T-cell (primary cell): ENCODE measurements at regions of chr1 and their contacts with region 1.

Region 1: GRCh38 chr1:236089046-236089773 is 24.3 kb upstream of the NID1 start:
- DNase-seq: no peak
- ATAC-seq: no peak
- H3K4me3 ChIP-seq: no peak overlapping the region
- H3K4me3 Mint-ChIP-seq: no peak overlapping the region
- H3K27ac ChIP-seq: no peak overlapping the region
- H3K27ac Mint-ChIP-seq: no peak overlapping the region
- H3K4me1 ChIP-seq: no peaks in the 10 kb centered on the region
- H3K4me1 Mint-ChIP-seq: no peaks in the 10 kb centered on the region
- H3K27me3 ChIP-seq: peaks cover 0 to 16% of the 10 kb centered on the region in 2 experiments
- H3K27me3 Mint-ChIP-seq: peaks cover 3 to 6% of the 10 kb centered on the region in 2 donors

Region 2: GRCh38 chr1:235855811-235856429 is 233.3 kb before region 1 on chr1:
- CTCF ChIA-PET with region 1: interaction called in 1 of 2 experiments, 11 read pairs
- POLR2A ChIA-PET with region 1: no interaction called
- DNase-seq: no peak
- ATAC-seq: peak in 1 of 4 experiments; percentile 53
- H3K4me3 ChIP-seq: no peak overlapping the region
- H3K4me3 Mint-ChIP-seq: no peak overlapping the region
- H3K27ac ChIP-seq: peak overlapping the region; percentile 14
- H3K27ac Mint-ChIP-seq: no peak overlapping the region
- H3K4me1 ChIP-seq: peaks cover 5 to 15% of the 10 kb centered on the region in 2 experiments
- H3K4me1 Mint-ChIP-seq: peaks cover 26 to 39% (median 28%) of the 10 kb centered on the region in 3 donors
- H3K27me3 ChIP-seq: no peaks in the 10 kb centered on the region
- H3K27me3 Mint-ChIP-seq: no peaks in the 10 kb centered on the region

Region 3: DNA sequence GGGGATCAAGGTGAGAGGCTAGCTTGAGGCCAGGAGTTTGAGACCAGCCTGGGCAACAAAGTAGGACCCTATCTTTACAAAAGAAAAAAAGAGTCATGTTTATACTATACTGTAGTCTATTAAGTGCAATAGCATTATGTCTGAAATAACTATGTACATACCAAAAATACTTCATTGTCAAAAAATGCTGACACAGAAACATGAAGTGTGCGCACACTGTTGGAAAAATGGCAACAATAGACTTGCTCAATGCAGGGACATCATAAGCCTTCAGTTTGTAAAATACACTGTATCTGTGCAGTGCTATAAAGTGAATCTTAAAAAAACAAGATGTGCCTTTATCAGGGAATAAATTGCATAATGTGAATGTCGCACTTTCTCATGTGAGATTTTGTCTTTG is 10.2 kb before region 1 on chr1:
- CTCF ChIA-PET with region 1: no interaction called
- POLR2A ChIA-PET with region 1: no interaction called
- DNase-seq: no peak
- ATAC-seq: no peak
- H3K4me3 ChIP-seq: no peak overlapping the region
- H3K4me3 Mint-ChIP-seq: no peak overlapping the region
- H3K27ac ChIP-seq: no peak overlapping the region
- H3K27ac Mint-ChIP-seq: no peak overlapping the region
- H3K4me1 ChIP-seq: no peaks in the 10 kb centered on the region
- H3K4me1 Mint-ChIP-seq: no peaks in the 10 kb centered on the region
- H3K27me3 ChIP-seq: peaks cover 0 to 3% of the 10 kb centered on the region in 2 experiments
- H3K27me3 Mint-ChIP-seq: peaks cover 0 to 6% of the 10 kb centered on the region in 2 donors